Mucosa of descending colon (tissue), 3 donors: ENCODE measurements at regions of chr18 and their contacts with region 1.

Region 1: GRCh38 chr18:36284671-36285295 is 12.7 kb upstream of the FHOD3 start:
- DNase-seq: peak in 1 of 3 donors; percentile 75
- ATAC-seq: peak; percentile 62
- H3K4me3 ChIP-seq: no peak overlapping the region
- H3K4me1 ChIP-seq: no peaks in the 10 kb centered on the region
- CTCF ChIP-seq: peak; percentile 74

Region 2: DNA sequence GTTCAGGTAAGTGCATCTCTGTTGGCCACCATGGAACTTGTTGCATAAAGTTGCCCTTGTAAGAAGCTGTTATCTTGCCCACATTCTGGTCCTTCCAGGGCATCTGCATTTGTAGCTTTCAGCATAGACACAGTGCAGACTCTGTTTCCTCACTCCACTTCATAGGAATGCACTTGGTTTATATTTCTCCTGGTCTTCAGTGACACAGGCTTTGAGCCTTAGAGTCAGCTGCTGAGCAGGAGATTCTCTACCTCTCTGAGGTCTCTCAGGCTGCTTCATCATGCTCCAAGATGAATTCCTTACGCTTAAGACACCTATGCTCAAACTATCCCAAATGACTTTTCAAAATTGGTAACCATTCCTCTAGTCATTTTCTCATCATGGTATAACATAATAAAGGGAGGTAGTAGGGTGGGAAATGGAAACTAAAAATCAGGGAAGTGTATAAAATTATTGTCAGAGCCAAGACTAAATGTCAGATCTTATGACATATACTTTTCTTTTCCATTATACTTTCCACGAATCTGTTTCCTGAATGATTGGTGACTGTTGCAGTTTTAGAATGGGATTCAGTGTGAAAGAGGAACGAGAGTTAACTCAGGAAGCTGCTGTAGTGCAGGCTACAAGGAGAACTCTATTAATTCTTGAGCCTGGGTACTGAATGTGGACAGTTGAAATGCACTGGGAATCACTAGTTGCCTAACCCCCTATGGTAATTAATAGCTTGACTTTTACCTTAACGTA is 631.2 kb before region 1 on chr18:
- intact Hi-C with region 1: no loop called
- DNase-seq: no peak
- ATAC-seq: no peak
- H3K4me3 ChIP-seq: no peak overlapping the region
- H3K4me1 ChIP-seq: no peaks in the 10 kb centered on the region
- CTCF ChIP-seq: no peak

Region 3: GRCh38 chr18:36015629-36016028 is 269.2 kb before region 1 on chr18:
- intact Hi-C with region 1: loop called (anchors 5 to 10 kb)
- DNase-seq: no peak
- ATAC-seq: no peak
- H3K4me3 ChIP-seq: no peak overlapping the region
- H3K4me1 ChIP-seq: no peaks in the 10 kb centered on the region
- CTCF ChIP-seq: no peak

Region 4: GRCh38 chr18:36023336-36023735 is 261.4 kb before region 1 on chr18:
- intact Hi-C with region 1: loop called (anchors 5 to 10 kb)
- DNase-seq: no peak
- ATAC-seq: no peak
- H3K4me3 ChIP-seq: no peak overlapping the region
- H3K4me1 ChIP-seq: no peaks in the 10 kb centered on the region
- CTCF ChIP-seq: no peak

Region 5: DNA sequence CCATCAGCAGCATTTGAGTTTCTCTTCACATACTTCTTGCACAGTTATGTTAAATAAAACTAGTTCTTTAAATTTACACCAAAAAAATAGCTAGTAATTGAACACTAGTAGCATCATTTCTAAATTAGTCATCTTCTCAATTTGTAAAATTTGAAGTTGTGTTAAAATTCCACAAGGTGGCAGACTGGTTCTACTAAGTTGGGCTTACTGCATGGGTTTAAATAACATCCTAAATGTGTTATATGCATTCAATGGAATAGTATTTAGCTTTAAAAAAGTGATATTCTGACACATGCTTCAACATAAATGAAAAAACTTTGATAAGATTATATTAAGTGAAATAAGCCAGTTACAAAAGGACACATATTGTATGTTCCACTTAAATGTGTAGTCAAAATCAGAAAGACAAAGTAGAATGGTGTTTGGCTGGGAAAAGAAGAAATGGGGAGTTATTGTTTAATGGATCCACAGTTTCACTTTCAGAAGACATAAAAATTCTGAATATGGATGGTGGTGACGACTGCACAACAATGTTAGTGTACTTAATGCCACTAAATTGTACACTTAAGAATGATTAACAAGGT is 188.8 kb before region 1 on chr18:
- intact Hi-C with region 1: loop called (anchors 2 kb)
- DNase-seq: peak in 1 of 3 donors; percentile 4
- ATAC-seq: no peak
- H3K4me3 ChIP-seq: no peak overlapping the region
- H3K4me1 ChIP-seq: no peaks in the 10 kb centered on the region
- CTCF ChIP-seq: no peak